Transverse colon (tissue), 4 donors: ENCODE measurements at regions of chr1 and their contacts with region 1.

Region 1: DNA sequence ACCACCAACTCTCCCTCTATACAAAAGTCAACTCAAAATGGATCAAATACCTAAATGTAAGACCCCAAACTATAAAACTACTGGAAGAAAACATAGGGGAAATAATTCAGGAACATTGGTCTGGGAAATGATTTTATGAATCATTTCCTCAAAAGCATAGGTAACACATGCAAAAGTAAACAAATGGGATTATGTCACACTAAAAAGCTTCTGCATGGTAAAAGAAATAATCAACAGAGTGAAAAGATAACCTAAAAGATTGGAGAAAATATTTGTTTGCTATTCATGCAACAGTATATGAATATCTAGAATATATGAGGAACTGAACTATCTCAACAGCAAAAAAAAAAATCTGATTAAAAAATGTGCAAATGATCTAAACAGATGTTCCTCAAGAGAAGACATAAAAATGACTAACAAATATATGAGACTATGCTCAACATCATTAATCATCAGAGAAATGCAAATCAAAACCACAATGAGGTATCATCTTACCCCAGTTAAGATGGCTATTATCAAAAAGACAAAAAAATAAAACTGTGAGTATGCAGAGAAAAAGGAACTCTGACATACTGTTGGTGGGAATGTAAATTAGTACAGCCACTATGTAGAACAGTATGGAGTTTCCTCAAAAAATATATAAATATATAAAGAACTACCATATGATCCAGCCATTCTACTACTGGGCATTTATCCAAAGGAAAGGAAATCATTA is 47.8 kb downstream of the VCAM1 start:
- DNase-seq: no peak
- H3K4me3 ChIP-seq: no peak overlapping the region
- H3K27ac ChIP-seq: no peak overlapping the region
- H3K4me1 ChIP-seq: no peaks in the 10 kb centered on the region
- H3K27me3 ChIP-seq: no peaks in the 10 kb centered on the region
- CTCF ChIP-seq: no peak
- EP300 ChIP-seq: no peak
- POLR2A ChIP-seq: no peak

Region 2: GRCh38 chr1:100313382-100313781 is 454.0 kb before region 1 on chr1:
- in situ Hi-C with region 1: no loop called
- intact Hi-C with region 1: no loop called
- DNase-seq: no peak
- H3K4me3 ChIP-seq: no peak overlapping the region
- H3K27ac ChIP-seq: no peak overlapping the region
- H3K4me1 ChIP-seq: no peaks in the 10 kb centered on the region
- H3K27me3 ChIP-seq: no peaks in the 10 kb centered on the region
- CTCF ChIP-seq: no peak
- EP300 ChIP-seq: no peak
- POLR2A ChIP-seq: no peak

Region 3: DNA sequence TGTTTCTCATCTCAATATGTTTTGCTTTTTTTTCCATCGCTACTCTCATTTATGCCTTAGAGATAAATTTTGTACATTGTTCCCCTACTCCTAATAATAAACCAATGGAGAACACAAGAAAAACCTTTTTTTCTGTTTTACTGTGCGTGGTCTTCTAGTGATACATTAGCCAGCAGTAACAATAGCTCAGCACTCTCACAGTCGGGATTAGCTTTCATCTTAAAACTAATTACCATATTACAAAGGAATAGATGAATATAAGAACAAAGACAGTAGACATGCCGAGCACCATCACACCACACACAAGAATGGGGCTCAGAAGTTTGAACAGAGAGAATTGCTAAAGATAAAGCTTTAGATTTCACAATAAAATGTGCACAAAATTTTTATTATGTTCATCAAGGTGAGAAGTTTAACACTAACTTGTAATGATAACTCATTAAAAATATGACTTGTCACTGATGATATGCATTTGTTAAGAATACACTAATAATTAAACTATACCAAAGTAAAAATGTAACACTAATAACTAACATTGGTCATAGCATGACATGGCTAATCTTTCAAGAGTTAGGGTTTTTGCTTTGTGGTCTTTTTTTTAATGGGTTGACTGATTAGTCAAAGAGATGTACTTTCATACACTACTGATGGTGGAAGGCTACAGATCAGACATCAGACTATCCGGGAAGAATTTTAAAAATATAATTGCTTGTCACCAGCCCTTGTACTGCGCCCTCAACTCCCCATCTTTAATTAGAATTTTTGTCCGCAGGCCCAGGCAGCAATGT is 65.5 kb after region 1 on chr1:
- in situ Hi-C with region 1: loop called in 1 of 4 experiments (anchors 10 kb)
- intact Hi-C with region 1: no loop called
- DNase-seq: no peak
- H3K4me3 ChIP-seq: no peak overlapping the region
- H3K27ac ChIP-seq: no peak overlapping the region
- H3K4me1 ChIP-seq: no peaks in the 10 kb centered on the region
- H3K27me3 ChIP-seq: no peaks in the 10 kb centered on the region
- CTCF ChIP-seq: no peak
- EP300 ChIP-seq: no peak
- POLR2A ChIP-seq: no peak